GM10248 (cell line): ENCODE measurements at regions of chr11 and their contacts with region 1.

Region 1: GRCh38 chr11:61378713-61379313 is 13.6 kb upstream of the TMEM216 start:
- DNase-seq: no peak
- CTCF ChIP-seq: no peak

Region 2: GRCh38 chr11:61161190-61162091 is 217.4 kb before region 1 on chr11 and contains the start of gene VPS37C:
- CTCF ChIA-PET with region 1: no interaction called
- POLR2A ChIA-PET with region 1: interaction called, 10 read pairs
- DNase-seq: peak; percentile 96
- CTCF ChIP-seq: peak; percentile 3

Region 3: GRCh38 chr11:61361686-61362541 is 16.9 kb before region 1 on chr11 and contains the starts of genes CYB561A3 and TMEM138:
- CTCF ChIA-PET with region 1: interaction called, 188 read pairs
- POLR2A ChIA-PET with region 1: interaction called, 15 read pairs
- DNase-seq: peak; percentile 92
- CTCF ChIP-seq: no peak